ENCODE measurements at regions of chr5 and their contacts with region 1.

Region 1: DNA sequence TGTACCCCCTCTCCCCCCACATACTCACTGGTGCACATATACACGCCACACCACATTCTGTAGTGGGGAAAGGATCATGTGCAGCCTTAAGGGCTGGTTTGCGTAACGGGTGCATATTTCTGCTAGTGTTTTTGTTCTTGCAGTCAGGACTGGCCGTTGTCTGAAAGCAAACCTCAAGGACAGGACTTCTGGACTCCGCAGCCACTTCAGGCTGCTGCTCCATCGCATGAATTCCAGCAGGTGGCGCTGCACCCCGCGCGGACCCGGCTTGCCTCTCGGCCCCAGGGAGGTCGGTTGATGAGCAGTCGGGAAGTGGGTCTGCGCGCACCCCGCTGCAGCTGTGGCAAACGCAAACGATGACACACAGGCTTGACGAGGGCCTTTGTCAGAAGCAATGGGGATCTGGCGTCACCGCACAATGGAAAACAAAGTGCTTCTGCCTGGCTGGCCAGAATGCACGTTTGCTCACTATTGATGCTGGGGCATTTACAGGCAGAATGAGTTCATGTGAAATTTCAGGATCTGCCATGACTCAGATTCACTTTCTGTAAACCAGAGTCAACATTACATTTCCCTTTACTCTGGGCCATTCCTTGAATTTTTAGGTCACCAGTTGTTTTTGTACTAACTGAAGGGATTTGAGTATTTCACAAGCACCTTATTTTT is 36.3 kb upstream of the GLRX start:
- DNase-seq: peak; percentile 96
- ATAC-seq: peak; percentile 74

Region 2: DNA sequence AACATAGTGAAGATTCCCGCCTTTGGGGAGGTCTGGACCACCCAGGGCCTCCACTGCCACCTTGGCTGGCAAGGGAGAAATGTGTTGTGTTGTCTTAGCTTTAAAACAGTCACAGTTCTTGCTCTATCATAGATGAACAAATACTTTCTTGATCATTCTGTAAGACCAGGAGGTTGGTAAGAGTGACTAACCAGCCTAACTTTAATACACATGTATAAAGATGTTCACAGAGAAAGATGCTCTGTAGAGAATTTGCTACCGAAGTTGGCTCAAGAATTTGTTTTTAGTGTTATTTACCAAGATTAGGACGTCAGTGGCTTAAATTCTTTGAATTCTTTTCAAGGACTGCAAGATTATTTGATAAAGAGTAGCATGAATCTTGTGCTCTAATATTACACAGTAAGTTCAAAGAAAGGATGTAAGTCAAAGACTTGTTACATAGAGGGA is 64.7 kb before region 1 on chr5:
- intact Hi-C with region 1: no loop called
- DNase-seq: no peak
- ATAC-seq: no peak

Region 3: GRCh38 chr5:95892780-95893354 is 34.1 kb after region 1 on chr5:
- intact Hi-C with region 1: loop called (anchors 5 kb)
- DNase-seq: no peak
- ATAC-seq: peak; percentile 63

Region 4: GRCh38 chr5:95961617-95962474 is 103.1 kb after region 1 on chr5 and contains the start of gene ELL2:
- intact Hi-C with region 1: loop called (anchors 1 kb)
- DNase-seq: peak; percentile 99
- ATAC-seq: peak; percentile 93
- total RNA-seq, gene ELL2: 26.7 TPM

Region 5: DNA sequence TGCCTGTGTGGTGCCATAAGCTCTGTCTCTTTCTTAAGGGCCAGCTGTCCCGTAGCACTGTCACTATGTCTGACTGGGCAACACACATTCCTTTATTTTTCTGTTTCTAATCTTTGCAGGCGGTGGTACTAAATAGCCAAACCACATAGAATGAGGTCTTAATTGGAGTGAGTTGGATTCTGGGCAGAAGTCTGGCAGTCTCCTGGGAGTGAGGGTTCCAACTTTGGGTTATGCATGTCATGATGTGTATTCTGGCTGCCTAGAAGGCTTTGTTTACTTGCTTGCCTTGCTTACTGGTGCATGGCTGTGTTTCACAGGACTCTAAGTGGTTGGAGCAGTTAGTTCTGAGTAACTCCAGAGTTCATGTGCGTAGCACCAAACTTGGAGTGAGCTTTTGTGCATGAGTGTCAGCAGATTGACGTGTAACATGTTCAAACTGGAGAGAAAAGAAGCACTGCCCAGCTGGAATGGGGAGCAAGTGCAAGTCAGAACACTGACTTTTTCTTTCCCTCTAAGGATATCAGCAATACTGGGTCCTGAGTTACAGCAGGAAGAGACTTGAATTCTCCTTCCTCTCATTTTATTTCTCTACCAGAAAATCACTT is 388.4 kb after region 1 on chr5:
- intact Hi-C with region 1: loop called (anchors 5 kb)
- DNase-seq: no peak
- ATAC-seq: peak; percentile 91

Region 6: GRCh38 chr5:96384353-96384752 is 525.6 kb after region 1 on chr5:
- intact Hi-C with region 1: loop called (anchors 5 kb)
- DNase-seq: peak; percentile 58
- ATAC-seq: peak; percentile 95

Region 7: GRCh38 chr5:96601811-96602244 is 743.0 kb after region 1 on chr5:
- intact Hi-C with region 1: loop called (anchors 5 kb)
- DNase-seq: no peak
- ATAC-seq: peak; percentile 77